Esophagus squamous epithelium (tissue), 5 donors: ENCODE measurements at regions of chr19 and their contacts with region 1.

Region 1: GRCh38 chr19:33771384-33772101 is 25.1 kb upstream of the KCTD15 start:
- DNase-seq: no peak
- H3K4me3 ChIP-seq: no peak overlapping the region
- H3K27ac ChIP-seq: no peak overlapping the region
- H3K4me1 ChIP-seq: no peaks in the 10 kb centered on the region
- H3K27me3 ChIP-seq: peaks cover 0 to 62% (median 0%) of the 10 kb centered on the region in 4 donors
- CTCF ChIP-seq: peak; percentile 65 to 90 (median 86)
- POLR2A ChIP-seq: no peak

Region 2: DNA sequence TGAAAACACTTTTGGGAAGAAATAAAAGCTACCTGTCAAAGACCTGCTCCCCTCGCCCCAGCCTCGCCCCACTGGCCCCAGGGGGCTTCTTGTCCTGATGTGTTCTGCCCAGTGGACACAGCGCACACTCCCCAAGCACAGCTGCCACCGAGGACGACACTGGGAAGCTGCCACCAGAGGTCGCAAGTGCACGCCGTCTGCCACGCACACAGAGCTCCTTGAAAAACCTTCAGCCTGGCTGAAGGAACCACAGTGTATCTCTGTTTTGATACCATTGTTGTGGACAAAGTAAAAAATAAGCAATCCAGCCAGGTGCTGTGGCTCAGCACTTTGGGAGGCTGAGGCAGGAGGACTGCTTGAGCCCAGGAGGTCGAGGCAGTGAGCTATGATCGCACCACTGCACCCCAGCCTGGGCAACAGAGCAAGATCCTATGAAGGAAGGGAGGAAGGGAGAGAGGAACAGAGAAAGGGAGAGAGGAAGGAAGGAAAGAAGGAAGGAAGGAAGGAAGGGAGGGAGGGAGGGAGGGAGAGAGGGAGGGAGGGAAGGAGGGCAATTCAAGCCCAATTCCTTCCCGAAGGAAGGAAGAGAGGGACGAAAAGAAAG is 340.8 kb before region 1 on chr19:
- intact Hi-C with region 1: loop called (anchors 5 kb)
- DNase-seq: no peak
- H3K4me3 ChIP-seq: no peak overlapping the region
- H3K27ac ChIP-seq: no peak overlapping the region
- H3K4me1 ChIP-seq: peaks cover 0 to 20% (median 0%) of the 10 kb centered on the region in 3 donors
- H3K27me3 ChIP-seq: no peaks in the 10 kb centered on the region
- CTCF ChIP-seq: peak; percentile 43 to 83 (median 74)
- POLR2A ChIP-seq: no peak